ENCODE measurements at regions of chr22 and their contacts with region 1.

Region 1: GRCh38 chr22:37079668-37080181 is 28.2 kb downstream of the KCTD17 start:
- DNase-seq: no peak
- H3K4me3 ChIP-seq: no peak overlapping the region
- CTCF ChIP-seq: no peak

Region 2: DNA sequence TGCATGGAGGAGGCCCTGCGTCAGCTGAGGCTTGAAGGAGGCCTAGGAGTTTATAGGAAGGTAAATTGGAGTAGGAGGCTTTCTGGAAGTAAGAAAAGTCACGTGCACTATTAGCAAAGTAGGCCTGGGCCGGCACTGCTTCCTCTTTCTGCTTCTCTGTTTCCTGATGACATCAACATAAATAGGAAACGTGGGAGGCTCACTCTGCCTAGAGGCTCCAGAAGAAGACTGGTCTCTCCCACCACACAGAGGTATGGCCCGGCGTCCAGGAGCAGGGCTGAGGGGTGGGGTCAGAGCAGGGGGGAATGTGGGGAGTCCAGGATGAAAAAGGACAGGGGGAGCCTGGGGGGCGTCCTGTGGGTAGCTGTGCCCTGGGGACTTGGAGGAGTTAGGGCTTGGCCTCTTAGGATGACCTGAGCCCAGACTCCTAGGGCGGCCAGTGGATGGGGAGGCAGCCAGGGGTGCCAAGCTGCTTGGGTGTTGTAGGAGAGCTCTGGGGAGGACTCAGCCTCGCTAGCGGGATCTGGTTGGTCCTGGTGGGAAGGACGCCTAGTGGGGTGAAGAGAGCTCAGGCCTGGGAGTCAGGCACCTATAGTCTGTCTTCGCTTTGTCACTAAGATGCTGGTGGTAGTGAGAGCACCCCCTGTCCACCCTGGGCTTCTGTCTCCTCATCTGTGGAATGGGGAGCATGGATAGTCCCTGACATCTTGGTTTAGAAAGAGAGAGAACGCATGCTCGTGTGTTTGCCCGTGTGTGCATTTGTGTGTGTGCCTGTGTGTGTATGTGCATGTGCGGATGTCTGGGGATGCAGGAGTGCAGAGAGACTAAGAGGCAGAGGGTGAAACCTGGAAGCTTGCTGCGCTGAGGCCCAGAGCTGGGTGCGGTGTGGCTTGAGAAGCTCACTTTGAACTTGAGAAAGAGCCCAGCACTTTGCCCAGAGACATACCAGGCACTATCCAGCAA is 166.0 kb before region 1 on chr22 and contains the start of gene CSF2RB:
- CTCF ChIA-PET with region 1: no interaction called
- POLR2A ChIA-PET with region 1: no interaction called
- DNase-seq: no peak
- H3K4me3 ChIP-seq: no peak within 1 kb of the TSS
- CTCF ChIP-seq: no peak

Region 3: GRCh38 chr22:37065180-37065579 is 14.5 kb before region 1 on chr22:
- CTCF ChIA-PET with region 1: interaction called, 12 read pairs
- POLR2A ChIA-PET with region 1: no interaction called
- DNase-seq: no peak
- H3K4me3 ChIP-seq: no peak overlapping the region
- CTCF ChIP-seq: no peak

Region 4: DNA sequence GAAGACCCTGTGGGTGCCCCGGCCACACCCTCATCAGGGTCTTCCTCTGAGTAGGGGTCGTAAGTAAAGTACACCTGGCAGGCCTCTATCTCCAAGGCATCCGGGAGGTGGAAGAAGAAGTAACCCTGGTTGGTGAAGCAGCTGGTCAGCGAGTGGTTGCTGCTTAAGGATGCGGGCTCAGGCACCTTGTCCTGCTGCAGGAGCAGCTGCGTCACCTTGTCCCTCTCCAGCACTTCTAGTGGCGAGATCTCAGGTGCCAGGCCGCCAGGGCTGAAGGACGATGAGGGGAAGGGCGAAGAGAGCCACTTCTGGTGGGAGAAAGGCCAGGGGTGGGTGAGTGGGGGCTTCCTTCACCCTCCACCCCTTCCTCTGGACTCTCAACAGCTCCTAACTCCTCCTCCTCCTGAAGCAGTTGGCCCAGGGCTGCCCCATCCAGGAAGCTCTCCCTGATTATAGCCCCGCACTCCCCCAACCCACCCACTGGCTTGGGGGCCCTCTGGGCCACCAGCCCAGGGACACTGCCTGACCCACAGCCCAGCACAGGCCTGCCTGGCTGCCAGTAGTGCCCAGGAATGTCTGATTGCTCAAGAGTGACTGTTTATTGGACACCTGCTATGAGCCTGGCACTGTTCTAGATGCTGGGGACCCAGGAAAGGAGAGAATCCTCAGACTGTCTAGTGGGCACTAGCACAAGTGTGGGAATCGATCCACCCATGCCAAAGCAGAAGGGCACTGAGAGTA is 49.0 kb after region 1 on chr22:
- CTCF ChIA-PET with region 1: no interaction called
- POLR2A ChIA-PET with region 1: no interaction called
- DNase-seq: no peak
- H3K4me3 ChIP-seq: no peak overlapping the region
- CTCF ChIP-seq: no peak